ENCODE measurements at regions of chr18 and their contacts with region 1.

Region 1: DNA sequence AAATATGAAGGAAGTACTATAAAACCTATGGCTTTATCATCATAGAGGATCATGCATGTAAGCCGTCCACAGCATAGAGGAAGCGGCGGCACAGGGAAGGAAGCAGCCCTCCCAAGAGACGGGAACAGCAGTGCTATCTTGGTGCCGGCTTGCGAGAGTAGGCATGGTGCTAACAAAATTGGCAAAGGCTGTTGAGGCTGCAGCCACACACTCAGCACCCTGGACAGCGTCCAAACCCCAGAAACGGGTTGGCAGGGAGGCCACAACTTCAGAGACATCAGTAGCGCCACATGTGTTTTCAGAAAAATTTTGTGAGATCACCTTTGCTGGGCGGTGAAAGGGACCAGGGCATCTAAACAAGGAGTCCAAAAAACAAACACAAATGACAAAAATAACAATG is 37.7 kb downstream of the NETO1 start:
- DNase-seq: peak; percentile 73
- H3K4me3 Mint-ChIP-seq: no peak overlapping the region
- H3K27ac Mint-ChIP-seq: no peak overlapping the region
- H3K4me1 Mint-ChIP-seq: peaks cover 22% of the 10 kb centered on the region
- H3K27me3 Mint-ChIP-seq: no peaks in the 10 kb centered on the region
- CTCF ChIP-seq: no peak

Region 2: GRCh38 chr18:73007195-73007914 is 177.2 kb after region 1 on chr18:
- CTCF ChIA-PET with region 1: no interaction called
- POLR2A ChIA-PET with region 1: no interaction called
- intact Hi-C with region 1: loop called (anchors 5 kb)
- DNase-seq: peak; percentile 63
- H3K4me3 Mint-ChIP-seq: peak overlapping the region; percentile 2
- H3K27ac Mint-ChIP-seq: peak overlapping the region; percentile 77
- H3K4me1 Mint-ChIP-seq: peaks cover 30% of the 10 kb centered on the region
- H3K27me3 Mint-ChIP-seq: no peaks in the 10 kb centered on the region
- CTCF ChIP-seq: no peak

Measured in MCF 10A (cell line).